ENCODE measurements at regions of chr12 and their contacts with region 1.

Region 1: GRCh38 chr12:53352331-53353256 is 16.4 kb upstream of the SP7 start:
- DNase-seq: peak; percentile 90
- ATAC-seq: peak; percentile 100
- H3K4me3 Mint-ChIP-seq: no peak overlapping the region
- H3K27ac Mint-ChIP-seq: peak overlapping the region; percentile 20
- H3K4me1 Mint-ChIP-seq: peaks cover 8% of the 10 kb centered on the region
- H3K27me3 Mint-ChIP-seq: no peaks in the 10 kb centered on the region

Region 2: GRCh38 chr12:53330671-53331070 is 21.9 kb before region 1 on chr12:
- CTCF ChIA-PET with region 1: interaction called, 49 read pairs
- DNase-seq: no peak
- ATAC-seq: no peak
- H3K4me3 Mint-ChIP-seq: no peak overlapping the region
- H3K27ac Mint-ChIP-seq: no peak overlapping the region
- H3K4me1 Mint-ChIP-seq: peaks cover 6% of the 10 kb centered on the region
- H3K27me3 Mint-ChIP-seq: peaks cover 33% of the 10 kb centered on the region

Region 3: GRCh38 chr12:53391729-53392128 is 39.1 kb after region 1 on chr12:
- CTCF ChIA-PET with region 1: interaction called, 110 read pairs
- DNase-seq: no peak
- ATAC-seq: no peak
- H3K4me3 Mint-ChIP-seq: no peak overlapping the region
- H3K27ac Mint-ChIP-seq: no peak overlapping the region
- H3K4me1 Mint-ChIP-seq: peaks cover 41% of the 10 kb centered on the region
- H3K27me3 Mint-ChIP-seq: no peaks in the 10 kb centered on the region

Region 4: DNA sequence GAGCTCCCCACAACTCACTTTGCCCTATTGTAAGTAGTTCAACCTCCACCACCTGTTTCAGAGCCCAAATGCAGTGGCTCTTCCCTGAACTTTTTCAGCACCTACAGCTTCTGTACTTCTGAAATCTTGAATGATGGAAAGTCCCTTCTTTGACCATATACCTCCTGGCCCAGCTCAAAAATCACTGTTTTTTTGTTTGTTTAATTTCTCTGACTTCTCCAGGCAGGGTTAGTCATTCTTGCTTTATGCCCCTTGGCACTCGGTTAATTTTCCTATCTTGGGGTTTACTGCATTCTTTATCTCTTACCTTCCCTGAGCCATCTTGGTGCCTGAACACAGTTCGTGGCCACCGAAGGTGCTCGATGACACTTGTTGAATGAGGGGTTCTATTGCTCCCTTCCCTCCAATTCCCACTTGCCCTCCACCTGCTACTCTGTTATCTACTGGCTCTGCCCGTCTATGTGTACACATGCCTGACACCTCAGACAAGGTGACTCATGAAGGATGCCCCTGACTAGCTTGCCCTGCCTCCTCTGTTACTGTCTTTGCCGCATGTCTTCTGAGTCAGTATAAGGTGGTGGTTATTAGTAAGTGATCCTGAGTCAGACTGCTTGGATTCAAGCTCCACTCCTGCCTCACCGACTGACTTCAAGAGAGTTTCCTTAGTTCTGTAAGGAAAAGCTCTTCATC is 75.5 kb after region 1 on chr12:
- CTCF ChIA-PET with region 1: interaction called, 160 read pairs
- DNase-seq: no peak
- ATAC-seq: peak; percentile 78
- H3K4me3 Mint-ChIP-seq: no peak overlapping the region
- H3K27ac Mint-ChIP-seq: no peak overlapping the region
- H3K4me1 Mint-ChIP-seq: peaks cover 3% of the 10 kb centered on the region
- H3K27me3 Mint-ChIP-seq: no peaks in the 10 kb centered on the region

Region 5: GRCh38 chr12:53508534-53509199 is 156.1 kb after region 1 on chr12:
- CTCF ChIA-PET with region 1: interaction called, 34 read pairs
- DNase-seq: peak; percentile 92
- ATAC-seq: peak; percentile 98
- H3K4me3 Mint-ChIP-seq: no peak overlapping the region
- H3K27ac Mint-ChIP-seq: peak overlapping the region; percentile 78
- H3K4me1 Mint-ChIP-seq: peaks cover 13% of the 10 kb centered on the region
- H3K27me3 Mint-ChIP-seq: no peaks in the 10 kb centered on the region